ENCODE measurements at regions of chr2 and their contacts with region 1.

Region 1: DNA sequence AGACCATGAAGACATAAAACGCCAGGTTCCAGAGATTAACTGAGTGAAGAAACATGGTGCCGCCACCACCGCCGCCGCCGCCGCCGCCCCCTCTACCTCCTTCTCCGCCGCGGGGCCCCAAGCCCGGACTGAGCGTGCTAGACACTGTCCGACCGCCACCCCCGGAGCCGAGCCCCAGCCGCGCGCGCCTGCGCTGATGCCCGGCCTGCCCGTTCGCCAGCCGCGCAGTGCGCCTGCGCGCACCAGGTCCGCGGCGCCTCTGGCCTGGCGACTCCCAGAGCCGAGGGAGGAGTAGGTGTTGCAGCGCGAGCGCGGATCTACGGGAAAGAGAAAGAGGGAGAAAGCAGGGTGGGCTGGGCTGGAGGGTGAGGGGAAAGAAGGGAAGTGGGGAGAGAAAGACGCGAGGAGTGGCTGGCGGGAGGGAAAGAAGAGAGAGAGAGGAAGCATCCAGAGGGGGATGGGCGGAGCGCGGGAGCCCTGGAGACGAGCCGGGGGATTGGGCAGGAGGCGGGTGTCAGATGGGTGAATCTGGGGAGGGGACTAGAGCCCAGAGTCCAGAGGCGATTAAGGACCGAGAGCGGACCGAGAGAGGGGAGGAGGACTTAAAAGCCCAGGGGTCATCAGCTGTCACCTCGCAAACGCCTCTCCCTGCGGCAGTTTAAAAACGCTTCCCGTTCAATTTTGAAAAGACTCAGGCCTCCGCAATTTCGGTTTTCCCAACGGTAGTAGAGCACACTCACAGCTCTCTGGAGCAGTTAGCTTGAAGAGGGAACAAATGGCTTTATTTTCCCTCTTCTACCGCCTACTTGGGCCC is at the start of gene PGAP1:
- DNase-seq: peak; percentile 88
- ATAC-seq: peak; percentile 86
- H3K4me3 Mint-ChIP-seq: peak within 1 kb of the TSS; percentile 93
- H3K27ac Mint-ChIP-seq: peak within 1 kb of the TSS; percentile 96
- H3K4me1 Mint-ChIP-seq: peaks cover 37% of the 10 kb centered on the region
- H3K27me3 Mint-ChIP-seq: no peaks in the 10 kb centered on the region
- total RNA-seq, gene PGAP1: 33.9 to 39.5 TPM

Region 2: GRCh38 chr2:196322973-196323810 is 603.6 kb before region 1 on chr2:
- CTCF ChIA-PET with region 1: no interaction called
- POLR2A ChIA-PET with region 1: no interaction called
- DNase-seq: no peak
- ATAC-seq: no peak
- H3K4me3 Mint-ChIP-seq: no peak overlapping the region
- H3K27ac Mint-ChIP-seq: no peak overlapping the region
- H3K4me1 Mint-ChIP-seq: no peaks in the 10 kb centered on the region
- H3K27me3 Mint-ChIP-seq: peaks cover 8% of the 10 kb centered on the region

Region 3: DNA sequence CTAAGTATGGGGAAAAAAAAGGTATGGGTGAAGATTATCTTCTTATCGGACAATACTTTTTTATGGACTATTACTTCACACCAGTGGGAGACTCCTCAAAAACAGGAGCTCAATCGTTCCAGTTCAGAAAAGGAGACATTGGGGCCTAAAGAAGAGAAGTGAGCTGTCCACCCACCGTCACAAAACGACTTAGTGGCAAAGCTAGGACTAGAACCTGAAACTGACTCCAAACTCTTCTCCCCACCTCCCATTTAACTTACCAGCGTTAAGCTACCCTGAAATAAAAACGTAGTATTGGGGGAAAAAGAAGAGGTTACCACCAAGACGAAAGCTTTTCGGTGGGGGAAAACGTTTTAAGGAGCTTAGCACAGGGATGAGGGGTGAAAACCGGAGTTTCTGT is 127.8 kb before region 1 on chr2:
- CTCF ChIA-PET with region 1: interaction called, 3 read pairs
- POLR2A ChIA-PET with region 1: interaction called, 16 read pairs
- DNase-seq: no peak
- ATAC-seq: peak; percentile 6
- H3K4me3 Mint-ChIP-seq: peak overlapping the region; percentile 94
- H3K27ac Mint-ChIP-seq: peak overlapping the region; percentile 94
- H3K4me1 Mint-ChIP-seq: peaks cover 30% of the 10 kb centered on the region
- H3K27me3 Mint-ChIP-seq: peaks cover 11% of the 10 kb centered on the region

Region 4: DNA sequence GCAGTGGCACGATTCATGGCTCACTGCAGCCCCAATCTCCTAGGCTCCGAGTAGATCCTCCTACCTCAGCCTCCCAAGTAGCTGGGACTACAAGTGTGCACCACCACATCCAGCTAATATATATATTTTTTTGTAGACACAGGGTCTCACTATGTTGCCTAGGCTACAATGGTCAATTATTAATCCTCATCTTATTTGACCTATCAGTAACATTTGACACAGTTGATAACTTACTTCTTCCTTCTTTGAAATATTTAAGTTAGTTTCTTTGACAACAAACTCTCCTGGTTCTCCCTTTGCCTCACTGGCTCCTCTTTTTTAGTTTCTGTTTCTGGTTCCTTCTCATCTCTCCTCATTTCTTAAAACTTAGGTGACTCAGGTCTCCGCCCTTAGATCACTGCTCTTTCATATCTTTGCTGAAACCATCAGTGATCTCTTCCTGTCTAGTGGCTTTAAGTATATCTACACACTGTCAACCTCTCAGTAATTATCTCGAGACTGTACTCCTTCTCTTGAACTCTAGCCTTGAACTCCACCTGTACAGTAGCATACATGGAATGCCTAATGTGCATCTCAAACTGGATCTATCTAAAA is 11.8 kb before region 1 on chr2:
- CTCF ChIA-PET with region 1: interaction called, 13 read pairs
- POLR2A ChIA-PET with region 1: interaction called, 100 read pairs
- DNase-seq: peak; percentile 62
- ATAC-seq: peak; percentile 98
- H3K4me3 Mint-ChIP-seq: peak overlapping the region; percentile 63
- H3K27ac Mint-ChIP-seq: peak overlapping the region; percentile 93
- H3K4me1 Mint-ChIP-seq: peaks cover 52% of the 10 kb centered on the region
- H3K27me3 Mint-ChIP-seq: no peaks in the 10 kb centered on the region

Region 5: GRCh38 chr2:196987649-196988364 is 61.0 kb after region 1 on chr2:
- CTCF ChIA-PET with region 1: interaction called, 6 read pairs
- POLR2A ChIA-PET with region 1: interaction called, 21 read pairs
- DNase-seq: peak; percentile 45
- ATAC-seq: peak; percentile 85
- H3K4me3 Mint-ChIP-seq: peak overlapping the region; percentile 31
- H3K27ac Mint-ChIP-seq: peak overlapping the region; percentile 76
- H3K4me1 Mint-ChIP-seq: peaks cover 47% of the 10 kb centered on the region
- H3K27me3 Mint-ChIP-seq: no peaks in the 10 kb centered on the region

Region 6: GRCh38 chr2:197042739-197043196 is 116.0 kb after region 1 on chr2:
- CTCF ChIA-PET with region 1: no interaction called
- POLR2A ChIA-PET with region 1: no interaction called
- DNase-seq: no peak
- ATAC-seq: no peak
- H3K4me3 Mint-ChIP-seq: no peak overlapping the region
- H3K27ac Mint-ChIP-seq: no peak overlapping the region
- H3K4me1 Mint-ChIP-seq: peaks cover 3% of the 10 kb centered on the region
- H3K27me3 Mint-ChIP-seq: no peaks in the 10 kb centered on the region